Thyroid gland (tissue), 4 donors: ENCODE measurements at regions of chr4 and their contacts with region 1.

Region 1: DNA sequence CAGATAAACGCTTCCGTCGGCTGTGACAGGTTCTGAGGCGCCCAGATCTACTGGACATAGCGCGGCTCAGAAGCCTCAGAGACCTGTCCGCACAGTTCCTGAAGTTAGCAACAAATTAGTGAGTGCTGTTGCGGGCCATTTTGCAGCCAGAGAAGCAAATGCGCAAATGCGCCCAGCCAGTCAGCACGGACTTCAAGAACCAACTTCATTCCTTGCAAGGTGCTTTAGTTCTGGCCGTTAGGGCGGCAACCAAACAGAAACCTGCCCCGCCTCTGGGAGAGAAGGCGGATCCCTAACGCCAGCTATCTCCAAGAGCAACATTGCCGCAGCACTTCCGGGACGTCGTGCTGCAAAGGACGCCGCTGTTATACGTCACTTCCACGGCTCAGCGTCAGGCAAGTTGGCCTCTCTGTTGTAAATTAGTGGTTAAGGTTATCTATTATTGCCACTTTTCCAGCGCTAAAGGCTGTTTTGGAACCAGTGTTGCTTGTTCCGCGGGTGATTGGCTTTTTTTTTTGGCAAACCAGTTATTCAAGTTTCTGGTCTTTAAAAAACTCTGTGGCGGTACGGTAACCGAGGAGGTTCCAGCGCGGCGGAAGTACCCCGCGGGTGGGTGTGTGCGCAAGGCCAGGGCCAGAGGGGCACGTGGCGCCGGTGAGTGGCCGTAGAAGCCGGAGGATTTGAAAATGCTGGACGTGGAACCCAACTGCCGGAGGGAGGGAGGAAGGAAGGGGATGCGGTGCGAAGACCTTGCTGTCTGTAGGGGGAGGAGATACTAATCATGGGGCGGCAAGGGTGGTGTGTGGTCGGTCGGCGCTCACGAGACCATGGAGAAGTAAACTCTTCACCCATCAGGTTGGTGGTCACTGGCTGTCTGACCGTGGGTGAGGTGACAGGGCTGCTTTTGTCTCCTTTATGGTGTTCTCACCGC is at the start of gene GAR1:
- DNase-seq: peak; percentile 94
- H3K4me3 ChIP-seq: peak within 1 kb of the TSS; percentile 11 to 80 (median 76)
- H3K27ac ChIP-seq: peak within 1 kb of the TSS; percentile 71 to 91 (median 82)
- H3K4me1 ChIP-seq: peaks cover 11 to 18% of the 10 kb centered on the region in 2 donors
- H3K27me3 ChIP-seq: no peaks in the 10 kb centered on the region
- CTCF ChIP-seq: no peak
- POLR2A ChIP-seq: peak in 1 of 2 donors; percentile 84
- total RNA-seq, gene GAR1: 1.8 to 7.8 (median 5.1) TPM

Region 2: DNA sequence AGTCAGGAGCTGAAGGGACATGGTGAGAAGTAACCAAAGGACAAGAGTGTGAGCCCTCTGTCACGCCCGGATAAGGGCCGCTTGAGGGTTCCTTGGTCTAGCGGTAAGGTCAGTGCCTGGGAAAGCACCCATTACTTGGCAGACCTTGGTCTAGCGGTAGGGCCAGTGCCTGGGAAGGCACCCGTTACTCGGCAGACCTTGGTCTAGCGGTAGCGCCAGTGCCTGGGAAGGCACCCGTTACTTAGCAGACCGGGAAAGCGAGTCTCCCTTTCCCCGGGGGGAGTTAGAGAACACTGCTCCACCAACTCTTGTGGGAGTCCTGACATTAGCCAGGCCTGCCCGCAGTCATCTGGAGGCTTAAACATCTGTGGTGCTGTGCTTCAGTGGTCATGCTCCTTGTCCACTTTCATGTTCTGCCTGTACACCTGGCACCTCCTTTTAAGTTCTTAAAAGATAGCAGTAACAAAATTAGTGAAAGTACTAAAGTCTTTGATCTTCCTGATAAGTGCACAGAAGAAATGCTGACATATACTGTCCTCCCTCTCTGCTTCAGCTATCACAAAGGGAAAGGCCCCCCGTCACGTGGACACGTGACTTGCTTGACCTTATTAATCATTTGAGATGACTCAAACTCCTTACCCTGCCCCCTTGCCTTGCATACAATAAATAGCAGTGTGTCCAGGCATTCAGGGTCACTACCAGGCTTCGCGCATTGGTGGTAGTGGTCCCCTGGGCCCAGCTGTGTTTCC is 391.1 kb before region 1 on chr4:
- intact Hi-C with region 1: loop called (anchors 5 kb)
- DNase-seq: peak in 1 of 2 donors; percentile 2
- H3K4me3 ChIP-seq: no peak overlapping the region
- H3K27ac ChIP-seq: no peak overlapping the region
- H3K4me1 ChIP-seq: no peaks in the 10 kb centered on the region
- H3K27me3 ChIP-seq: no peaks in the 10 kb centered on the region
- CTCF ChIP-seq: no peak
- POLR2A ChIP-seq: no peak

Region 3: DNA sequence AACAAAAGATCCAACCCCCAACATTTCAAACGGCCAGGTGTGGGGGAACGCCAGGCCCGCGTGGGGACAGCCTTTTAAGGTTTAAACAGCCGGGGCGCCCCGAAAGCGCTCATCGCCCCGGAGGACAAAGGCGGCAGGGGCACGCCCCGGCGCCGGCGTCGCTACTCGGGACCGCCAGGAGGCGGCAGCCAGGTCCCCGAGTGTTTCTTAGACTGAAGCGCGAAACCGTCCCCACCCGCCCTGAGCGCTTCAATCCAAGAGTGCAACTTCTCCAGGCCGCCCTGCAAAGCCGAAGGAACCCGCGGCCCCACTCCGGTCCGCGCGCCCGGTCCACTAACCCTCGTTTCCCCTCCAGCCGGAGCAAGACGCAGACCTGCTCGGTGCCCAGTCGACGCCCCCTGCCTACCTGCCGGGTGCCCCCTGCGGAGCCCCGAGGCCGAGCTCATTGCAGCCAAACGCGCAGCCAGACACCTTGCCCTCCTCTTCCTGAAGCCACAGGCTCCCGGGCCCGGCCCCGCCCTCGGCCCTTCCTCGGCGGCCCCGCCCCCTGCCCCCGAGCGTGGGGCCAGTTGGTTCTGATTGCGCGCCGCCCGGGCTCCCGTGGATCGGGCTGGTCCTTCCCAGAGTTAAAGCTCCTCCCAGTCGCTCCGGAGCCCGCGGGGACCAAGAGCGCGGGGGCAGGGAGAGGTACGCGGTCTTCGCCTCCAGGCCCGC is 112.3 kb before region 1 on chr4 and contains the start of gene CASP6:
- intact Hi-C with region 1: loop called (anchors 10 kb)
- DNase-seq: peak; percentile 94 to 95
- H3K4me3 ChIP-seq: peak within 1 kb of the TSS; percentile 19 to 61 (median 35)
- H3K27ac ChIP-seq: peak within 1 kb of the TSS; percentile 42 to 83 (median 83)
- H3K4me1 ChIP-seq: peaks cover 14% of the 10 kb centered on the region in 2 donors
- H3K27me3 ChIP-seq: no peaks in the 10 kb centered on the region
- CTCF ChIP-seq: peak; percentile 44 to 79 (median 61)
- POLR2A ChIP-seq: peak in 1 of 2 donors; percentile 82
- total RNA-seq, gene CASP6: 16.2 to 25.6 (median 20.5) TPM

Region 4: DNA sequence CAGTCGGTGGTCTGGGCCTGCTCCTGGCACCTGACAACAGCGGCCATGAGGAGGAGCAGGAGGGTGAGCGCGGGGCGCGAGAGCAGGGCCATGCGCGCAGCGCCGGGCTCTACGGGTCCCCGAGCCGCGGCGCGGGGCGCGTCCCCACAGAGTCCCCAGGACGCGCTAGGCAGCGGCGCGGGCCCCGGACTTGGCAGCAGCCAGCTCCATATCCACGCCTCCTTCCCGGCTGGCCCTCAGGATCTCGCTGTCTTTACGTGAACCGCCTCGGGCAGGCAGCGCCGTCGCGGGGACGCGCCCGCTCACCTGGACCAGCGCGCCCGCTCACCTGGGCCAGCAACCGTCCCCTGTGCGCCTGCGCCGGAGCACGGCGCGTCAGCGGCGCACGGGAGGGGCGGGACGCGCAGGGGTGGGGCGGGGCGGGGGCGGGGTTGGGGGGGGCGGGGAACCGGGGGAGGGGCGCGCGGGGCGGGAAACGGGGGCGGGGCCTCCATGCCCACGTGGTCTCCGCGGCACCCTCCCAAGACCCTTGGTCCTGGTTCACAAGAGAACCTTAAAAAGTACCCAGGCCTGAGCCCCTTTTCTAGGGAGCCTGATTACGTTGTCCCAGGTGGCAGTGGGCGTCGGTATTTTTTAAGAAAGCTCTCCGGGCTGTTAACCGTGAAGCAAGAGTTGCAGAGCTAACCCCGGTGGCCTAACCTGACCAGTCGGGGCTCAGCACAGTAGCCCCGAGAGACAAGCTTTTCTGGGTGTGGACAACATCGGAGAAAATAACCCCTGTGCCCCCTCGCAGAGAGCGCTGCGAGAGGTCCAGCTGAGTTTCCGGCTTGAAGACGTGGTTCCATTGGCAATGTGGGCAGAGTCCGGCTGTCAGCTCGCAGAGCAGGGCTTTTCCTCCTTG is 85.4 kb before region 1 on chr4 and contains the start of gene PLA2G12A:
- intact Hi-C with region 1: loop called (anchors 10 kb)
- DNase-seq: peak; percentile 93 to 95
- H3K4me3 ChIP-seq: peak within 1 kb of the TSS; percentile 47 to 85 (median 73)
- H3K27ac ChIP-seq: peak within 1 kb of the TSS; percentile 31 to 83 (median 83)
- H3K4me1 ChIP-seq: no peaks in the 10 kb centered on the region
- H3K27me3 ChIP-seq: no peaks in the 10 kb centered on the region
- CTCF ChIP-seq: no peak
- POLR2A ChIP-seq: peak; percentile 45 to 95
- total RNA-seq, gene PLA2G12A: 37.9 to 216 (median 55.5) TPM

Region 5: GRCh38 chr4:110245577-110245976 is 430.2 kb after region 1 on chr4:
- intact Hi-C with region 1: no loop called
- DNase-seq: no peak
- H3K4me3 ChIP-seq: no peak overlapping the region
- H3K27ac ChIP-seq: no peak overlapping the region
- H3K4me1 ChIP-seq: no peaks in the 10 kb centered on the region
- H3K27me3 ChIP-seq: no peaks in the 10 kb centered on the region
- CTCF ChIP-seq: no peak
- POLR2A ChIP-seq: no peak